ENCODE measurements at regions of chr10 and their contacts with region 1.

Region 1: DNA sequence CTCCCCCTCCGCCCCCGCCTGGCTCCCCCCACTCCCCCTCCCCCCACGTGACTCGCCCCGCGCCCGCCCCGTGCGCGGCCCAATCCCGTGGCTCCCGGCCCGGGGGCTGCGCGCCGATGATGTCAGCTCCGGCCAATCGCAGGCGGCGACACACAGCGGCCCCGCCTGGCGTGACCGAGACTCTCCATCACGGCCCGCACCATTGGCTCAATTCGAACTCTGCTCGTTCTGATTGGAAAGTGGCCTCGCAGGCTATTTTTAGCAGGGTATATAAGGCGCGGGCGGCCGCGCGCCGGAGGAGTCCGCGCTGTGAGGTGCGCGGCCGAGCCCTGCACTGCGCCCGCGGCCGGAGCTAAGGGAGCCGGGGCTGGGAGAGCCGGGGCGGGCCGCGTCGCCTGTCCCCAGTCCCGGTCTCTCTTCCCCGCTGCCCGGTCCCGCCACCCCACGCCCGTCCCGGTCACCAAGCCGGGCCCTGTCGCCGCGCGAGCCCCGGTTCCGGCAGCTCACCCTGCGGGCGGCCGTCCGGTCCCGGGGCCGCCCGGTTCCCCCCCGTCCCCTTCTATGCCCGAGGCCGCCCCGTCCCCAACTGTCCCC is 345 bp upstream of the KLF6 start:
- H3K4me3 ChIP-seq: peak overlapping the region; percentile 91
- H3K27ac ChIP-seq: peak overlapping the region; percentile 98
- H3K4me1 ChIP-seq: peaks cover 6% of the 10 kb centered on the region; the same call in 1 of the 2 replicates
- CTCF ChIP-seq: no peak

Region 2: DNA sequence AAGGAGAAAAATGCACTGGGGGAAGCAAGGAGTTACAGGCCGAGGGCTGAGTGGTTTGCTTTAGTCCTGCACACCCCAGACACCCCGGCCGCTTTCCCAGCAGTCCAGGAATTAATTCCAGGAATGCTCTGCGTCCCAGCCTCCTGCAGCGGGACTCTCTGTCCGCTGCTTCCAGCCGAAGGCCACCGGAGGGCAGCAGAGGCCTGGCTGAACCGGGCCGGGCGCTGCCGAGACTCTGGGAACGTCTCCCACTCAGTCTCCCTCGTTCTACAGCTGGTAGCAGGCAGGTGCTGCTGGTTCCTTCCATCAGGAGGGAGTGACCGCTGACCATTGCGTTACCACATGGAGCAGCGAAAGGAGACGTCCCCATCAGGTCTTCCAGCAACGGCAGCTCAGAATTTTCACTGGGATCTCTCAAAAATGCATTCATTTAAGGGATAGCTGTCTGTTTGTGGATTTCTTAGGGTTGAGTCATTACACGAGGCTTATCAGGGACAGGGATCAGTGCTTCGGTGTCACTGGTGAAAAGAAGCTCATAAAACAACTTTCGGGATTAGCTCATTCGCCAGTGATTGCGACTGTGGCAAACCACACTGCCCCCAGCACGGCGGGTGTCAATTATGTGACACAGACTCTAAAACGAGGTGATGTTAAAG is 587.9 kb before region 1 on chr10:
- CTCF ChIA-PET with region 1: no interaction called
- POLR2A ChIA-PET with region 1: interaction called, 15 read pairs
- H3K4me3 ChIP-seq: peak overlapping the region; percentile 27
- H3K27ac ChIP-seq: peak overlapping the region; percentile 74
- H3K4me1 ChIP-seq: peaks cover 6% of the 10 kb centered on the region; the same call in 1 of the 2 replicates
- CTCF ChIP-seq: peak; percentile 87

Region 3: DNA sequence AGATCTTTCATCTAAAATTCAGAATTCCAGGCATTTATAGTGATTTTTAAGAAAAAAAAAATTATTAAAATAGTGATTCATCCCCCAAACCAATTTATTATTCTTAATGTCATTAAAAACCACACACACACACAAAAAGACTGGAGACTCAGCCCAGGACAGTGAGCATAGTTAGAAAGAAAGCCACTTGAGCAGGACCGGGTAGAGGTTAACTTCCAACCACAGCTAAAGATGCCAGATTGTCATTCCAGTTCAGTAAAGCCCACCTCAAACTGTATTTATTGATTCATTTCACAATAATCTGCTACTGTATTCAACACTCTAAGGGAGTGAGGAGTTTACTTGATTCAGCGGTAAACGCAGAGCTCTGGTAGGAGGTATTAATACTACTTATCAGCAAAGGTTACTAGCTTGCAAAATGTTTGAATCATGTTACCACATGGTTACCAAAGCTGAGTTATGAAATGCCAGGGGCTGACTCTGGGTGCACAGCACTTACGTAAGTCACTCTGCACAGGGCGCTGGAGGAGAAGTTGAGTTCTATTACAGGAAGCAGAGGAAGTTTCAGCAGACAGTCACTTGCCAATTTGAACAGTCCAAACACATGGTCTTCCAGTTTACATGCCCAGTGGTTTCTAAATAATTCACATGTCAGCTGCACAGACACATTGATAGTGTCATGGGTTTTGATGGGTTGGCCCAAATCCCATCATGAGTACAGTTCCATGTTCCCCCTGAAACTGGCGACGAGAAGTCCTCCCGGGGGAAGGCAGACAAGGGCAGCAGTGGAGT is 64.9 kb before region 1 on chr10:
- CTCF ChIA-PET with region 1: no interaction called
- POLR2A ChIA-PET with region 1: no interaction called
- H3K4me3 ChIP-seq: no peak overlapping the region
- H3K27ac ChIP-seq: no peak overlapping the region
- H3K4me1 ChIP-seq: no peaks in the 10 kb centered on the region
- CTCF ChIP-seq: no peak

Region 4: DNA sequence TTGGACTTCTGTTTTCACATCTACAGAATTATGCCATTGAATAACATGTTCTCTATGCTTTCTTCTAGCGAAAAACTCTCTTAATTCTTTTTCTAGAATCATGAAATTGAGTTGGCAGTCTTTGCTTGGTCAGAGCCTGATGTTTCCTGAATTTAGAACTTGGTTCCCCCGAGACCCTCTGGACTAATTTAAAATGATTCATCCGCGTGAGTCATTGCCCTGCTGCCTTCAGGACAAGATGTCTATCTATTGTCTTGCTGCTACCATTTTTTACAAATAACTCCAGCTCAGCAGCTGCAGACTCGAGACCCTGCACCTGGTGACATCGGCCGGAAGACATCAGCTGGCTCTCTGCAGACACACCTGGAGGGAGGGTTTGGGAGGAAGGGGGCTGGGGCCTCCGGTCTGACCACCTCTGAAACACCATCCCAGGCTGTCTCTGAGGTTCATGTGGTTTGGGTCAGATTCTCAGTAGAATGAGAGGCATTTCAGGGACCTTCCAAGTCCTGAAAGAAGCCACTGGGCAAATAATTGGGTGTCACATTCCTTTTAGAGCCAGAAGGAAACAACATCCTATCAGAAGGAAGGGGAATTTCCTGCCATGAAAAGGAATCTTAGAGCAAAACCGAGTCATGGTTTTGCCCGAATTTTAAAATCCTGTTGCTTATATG is 20.6 kb after region 1 on chr10:
- CTCF ChIA-PET with region 1: no interaction called
- POLR2A ChIA-PET with region 1: interaction called, 32 read pairs
- H3K4me3 ChIP-seq: no peak overlapping the region
- H3K27ac ChIP-seq: peak overlapping the region; percentile 42; the same call in 1 of the 2 replicates
- H3K4me1 ChIP-seq: peaks cover 9% of the 10 kb centered on the region
- CTCF ChIP-seq: no peak

Region 5: GRCh38 chr10:3828404-3829155 is 43.2 kb after region 1 on chr10:
- CTCF ChIA-PET with region 1: no interaction called
- POLR2A ChIA-PET with region 1: interaction called, 19 read pairs
- H3K4me3 ChIP-seq: no peak overlapping the region
- H3K27ac ChIP-seq: no peak overlapping the region
- H3K4me1 ChIP-seq: no peaks in the 10 kb centered on the region
- CTCF ChIP-seq: no peak

Region 6: DNA sequence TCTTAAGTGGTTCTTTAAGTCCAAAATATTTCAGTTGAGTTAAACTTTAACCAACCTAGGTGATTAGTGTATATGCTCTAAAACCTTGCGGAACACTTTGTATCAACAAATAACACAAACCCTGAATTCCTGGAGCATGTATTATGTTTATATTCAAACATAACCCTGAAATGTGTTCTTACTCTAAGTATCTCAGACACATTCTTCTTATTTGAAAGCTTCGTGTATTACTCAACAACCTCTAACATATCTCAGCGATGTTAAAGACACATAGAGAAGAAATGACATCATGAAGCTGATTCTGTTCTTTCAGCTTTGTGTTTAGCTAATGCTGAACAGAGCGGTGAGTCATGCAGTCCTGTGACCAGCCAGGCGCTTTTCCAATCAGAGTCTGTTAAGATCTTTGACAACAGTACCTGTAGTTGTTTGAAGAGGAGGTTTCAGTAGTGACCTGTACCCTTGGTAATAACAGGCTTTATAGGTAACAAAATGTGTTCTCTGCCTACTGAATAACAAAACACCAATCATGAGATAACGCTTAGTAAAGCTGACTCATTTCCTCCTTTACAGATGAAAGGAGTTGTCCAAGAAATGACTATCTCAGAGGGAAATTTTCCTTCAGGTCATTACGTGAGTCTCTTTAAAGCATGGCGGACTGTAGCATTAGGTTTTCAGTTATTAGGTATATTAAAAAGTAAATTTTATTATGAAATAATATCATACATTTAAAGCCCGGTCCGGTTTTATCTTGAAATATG is 67.0 kb after region 1 on chr10:
- CTCF ChIA-PET with region 1: no interaction called
- POLR2A ChIA-PET with region 1: interaction called, 57 read pairs
- H3K4me3 ChIP-seq: no peak overlapping the region
- H3K27ac ChIP-seq: peak overlapping the region; percentile 52
- H3K4me1 ChIP-seq: peaks cover 15% of the 10 kb centered on the region
- CTCF ChIP-seq: no peak